ENCODE measurements at regions of chr3 and their contacts with region 1.

Region 1: DNA sequence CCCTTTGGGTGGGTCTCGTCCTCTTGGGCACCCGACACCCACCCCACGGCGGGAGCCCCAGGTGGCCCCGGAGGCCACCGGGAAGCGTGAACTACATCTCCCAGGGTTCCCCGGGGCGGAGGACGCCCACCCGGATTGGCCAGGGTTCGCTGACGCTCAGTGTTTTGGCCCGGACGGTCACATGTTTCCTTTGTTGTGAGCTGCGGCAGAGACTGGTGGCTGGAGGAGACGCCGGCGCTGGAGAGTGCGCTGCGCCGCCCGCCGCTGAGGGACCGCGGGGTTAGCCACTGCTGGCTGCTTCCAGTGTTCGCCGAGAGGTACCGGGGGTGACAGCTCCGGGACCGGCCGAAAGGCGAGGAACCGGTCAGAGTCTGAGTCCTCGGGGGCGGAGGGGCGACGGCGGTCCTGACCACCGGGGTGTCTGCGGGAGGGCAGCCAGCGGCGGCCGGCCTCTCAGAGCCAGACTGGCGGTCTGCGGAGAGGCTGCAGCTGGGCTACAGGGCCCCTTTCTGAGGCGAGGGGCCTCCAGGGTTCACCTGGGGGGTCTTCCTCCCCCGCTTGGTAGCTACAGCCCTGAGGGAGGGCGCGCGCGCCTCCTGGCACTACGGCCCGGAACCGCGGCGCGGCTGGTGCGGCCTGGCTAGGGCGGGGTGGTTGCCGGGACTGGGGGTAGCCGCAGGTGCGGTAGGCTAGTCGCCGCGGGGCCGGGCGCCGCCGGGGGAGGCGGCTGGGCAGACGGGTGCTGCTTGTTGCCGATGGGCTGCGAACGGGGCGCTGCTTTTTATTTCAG is at the start of gene KLHL24:
- DNase-seq: peak; percentile 93
- ATAC-seq: peak; percentile 86
- H3K4me3 ChIP-seq: peak within 1 kb of the TSS; percentile 75
- H3K27ac ChIP-seq: peak within 1 kb of the TSS; percentile 6; the same call in 1 of the 2 replicates
- H3K4me1 ChIP-seq: peaks cover 25% of the 10 kb centered on the region
- H3K27me3 ChIP-seq: no peaks in the 10 kb centered on the region
- CTCF ChIP-seq: 0 out of 2 replicates have a peak, but pooled peaks have one; percentile 13
- total RNA-seq, gene KLHL24: 7.4 and 10.0 TPM in 2 replicates

Region 2: GRCh38 chr3:183073839-183074238 is 561.8 kb before region 1 on chr3:
- CTCF ChIA-PET with region 1: no interaction called
- POLR2A ChIA-PET with region 1: no interaction called
- intact Hi-C with region 1: no loop called
- DNase-seq: peak; percentile 68
- ATAC-seq: peak; percentile 89
- H3K4me3 ChIP-seq: peak overlapping the region; percentile 52
- H3K27ac ChIP-seq: peak overlapping the region; percentile 94
- H3K4me1 ChIP-seq: peaks cover 18% of the 10 kb centered on the region
- H3K27me3 ChIP-seq: no peaks in the 10 kb centered on the region
- CTCF ChIP-seq: no peak

Region 3: DNA sequence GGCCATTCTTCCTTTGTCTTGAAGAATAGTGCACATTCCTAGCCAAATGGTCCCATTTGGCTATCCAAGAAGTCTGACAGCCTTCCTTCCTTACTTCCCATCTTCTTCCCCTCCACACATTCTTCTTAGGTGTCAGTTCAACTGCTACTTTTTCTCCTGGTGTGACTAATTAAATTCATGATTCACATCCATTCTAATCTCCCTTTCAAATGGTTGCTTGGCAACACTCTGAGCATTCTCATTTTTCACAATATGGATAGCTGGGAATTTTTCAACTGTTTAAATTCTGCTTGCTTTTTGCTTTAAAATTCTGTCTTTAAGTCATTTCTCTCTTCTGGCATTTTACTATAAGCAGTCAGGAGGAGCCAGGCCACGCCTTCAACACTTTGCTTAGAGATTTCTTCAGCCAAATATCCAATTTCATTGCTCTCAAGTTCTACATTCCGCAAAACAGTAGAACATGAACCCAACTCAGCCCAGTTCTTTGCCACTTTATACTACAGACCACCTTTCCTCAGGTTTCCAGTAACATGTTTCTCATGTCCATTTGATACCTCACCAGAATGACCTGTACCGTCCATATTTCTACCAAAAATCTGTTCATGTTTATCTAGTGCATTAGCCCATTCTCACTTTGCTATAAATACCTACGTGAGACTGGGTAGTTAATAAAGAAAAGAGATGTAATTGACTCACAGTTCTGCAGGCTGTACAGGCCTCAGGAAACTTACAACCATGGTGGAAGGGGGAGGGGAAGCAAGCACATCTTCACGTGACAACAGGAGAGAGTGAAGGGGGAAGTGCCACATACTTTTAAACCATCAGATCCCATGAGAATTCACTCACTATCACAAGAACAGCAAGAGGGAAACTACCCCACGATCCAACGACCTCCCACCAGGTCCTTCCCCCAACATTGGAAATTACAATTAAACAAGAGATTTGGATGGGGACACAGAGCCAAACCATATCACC is 175.3 kb before region 1 on chr3:
- CTCF ChIA-PET with region 1: no interaction called
- POLR2A ChIA-PET with region 1: no interaction called
- intact Hi-C with region 1: loop called (anchors 10 kb)
- DNase-seq: no peak
- ATAC-seq: no peak
- H3K4me3 ChIP-seq: no peak overlapping the region
- H3K27ac ChIP-seq: no peak overlapping the region
- H3K4me1 ChIP-seq: peaks cover 4% of the 10 kb centered on the region
- H3K27me3 ChIP-seq: no peaks in the 10 kb centered on the region
- CTCF ChIP-seq: no peak

Region 4: DNA sequence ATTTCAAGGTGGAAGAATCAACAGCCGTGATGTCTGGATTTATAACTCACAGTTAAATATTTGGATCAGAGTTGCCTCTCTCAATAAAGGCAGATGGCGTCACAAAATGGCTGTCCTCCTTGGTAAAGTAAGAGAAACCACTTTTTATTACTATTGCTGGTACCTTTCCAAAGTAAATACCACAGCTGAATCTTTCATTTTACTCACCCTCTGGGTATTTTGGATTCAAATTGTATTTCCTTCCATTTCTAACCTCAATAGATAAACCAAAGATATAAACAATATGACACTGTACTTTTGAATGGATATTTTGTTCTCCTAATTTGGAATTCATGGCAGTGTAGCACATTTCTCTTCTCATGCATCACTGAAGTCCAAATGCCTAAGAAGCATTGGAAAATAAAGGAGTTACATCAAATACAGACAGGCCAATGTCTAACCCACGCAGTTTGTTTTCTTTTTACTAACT is 29.3 kb after region 1 on chr3:
- CTCF ChIA-PET with region 1: no interaction called
- POLR2A ChIA-PET with region 1: no interaction called
- intact Hi-C with region 1: loop called (anchors 2 kb)
- DNase-seq: peak; percentile 97
- ATAC-seq: peak; percentile 94
- H3K4me3 ChIP-seq: no peak overlapping the region
- H3K27ac ChIP-seq: peak overlapping the region; percentile 52
- H3K4me1 ChIP-seq: peaks cover 10% of the 10 kb centered on the region
- H3K27me3 ChIP-seq: no peaks in the 10 kb centered on the region
- CTCF ChIP-seq: no peak

Region 5: GRCh38 chr3:183697610-183698317 is 62.1 kb after region 1 on chr3 and contains the start of gene YEATS2:
- CTCF ChIA-PET with region 1: no interaction called
- POLR2A ChIA-PET with region 1: interaction called, 5 read pairs
- intact Hi-C with region 1: loop called (anchors 2 kb)
- DNase-seq: peak; percentile 73
- ATAC-seq: peak; percentile 79
- H3K4me3 ChIP-seq: peak within 1 kb of the TSS; percentile 99
- H3K27ac ChIP-seq: peak within 1 kb of the TSS; percentile 5; the same call in 1 of the 2 replicates
- H3K4me1 ChIP-seq: peaks cover 15% of the 10 kb centered on the region
- H3K27me3 ChIP-seq: no peaks in the 10 kb centered on the region
- CTCF ChIP-seq: no peak
- total RNA-seq, gene YEATS2: 30.4 and 31.0 TPM in 2 replicates

Region 6: DNA sequence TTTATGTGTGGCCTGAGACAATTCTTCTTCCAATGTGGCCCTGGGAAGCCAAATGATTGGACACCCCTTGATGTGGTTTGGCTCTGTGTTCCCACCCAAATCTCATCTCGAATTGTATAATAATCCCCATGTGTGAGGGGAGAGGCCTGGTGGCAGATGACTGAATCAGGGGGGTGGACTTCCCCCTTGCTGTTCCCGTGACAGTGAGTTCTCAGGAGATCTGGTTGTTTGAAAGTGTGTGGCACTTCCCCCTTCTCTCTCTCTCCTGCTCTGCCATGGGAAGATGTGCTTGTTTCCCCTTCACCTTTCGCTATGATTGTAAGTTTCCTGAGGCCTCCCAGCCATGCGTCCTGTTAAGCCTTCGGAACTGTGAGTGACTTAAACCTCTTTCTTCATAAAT is 309.1 kb after region 1 on chr3:
- CTCF ChIA-PET with region 1: no interaction called
- POLR2A ChIA-PET with region 1: no interaction called
- intact Hi-C with region 1: no loop called
- DNase-seq: no peak
- ATAC-seq: no peak
- H3K4me3 ChIP-seq: no peak overlapping the region
- H3K27ac ChIP-seq: no peak overlapping the region
- H3K4me1 ChIP-seq: no peaks in the 10 kb centered on the region
- H3K27me3 ChIP-seq: no peaks in the 10 kb centered on the region
- CTCF ChIP-seq: no peak

Measured in PC-3 (cell line).